Posterior cingulate gyrus (tissue), 11 donors: ENCODE measurements at regions of chr17 and their contacts with region 1.

Region 1: GRCh38 chr17:47789611-47790561 is 31.7 kb downstream of the OSBPL7 start:
- DNase-seq: peak; percentile 23 to 94 (median 58)

Region 2: DNA sequence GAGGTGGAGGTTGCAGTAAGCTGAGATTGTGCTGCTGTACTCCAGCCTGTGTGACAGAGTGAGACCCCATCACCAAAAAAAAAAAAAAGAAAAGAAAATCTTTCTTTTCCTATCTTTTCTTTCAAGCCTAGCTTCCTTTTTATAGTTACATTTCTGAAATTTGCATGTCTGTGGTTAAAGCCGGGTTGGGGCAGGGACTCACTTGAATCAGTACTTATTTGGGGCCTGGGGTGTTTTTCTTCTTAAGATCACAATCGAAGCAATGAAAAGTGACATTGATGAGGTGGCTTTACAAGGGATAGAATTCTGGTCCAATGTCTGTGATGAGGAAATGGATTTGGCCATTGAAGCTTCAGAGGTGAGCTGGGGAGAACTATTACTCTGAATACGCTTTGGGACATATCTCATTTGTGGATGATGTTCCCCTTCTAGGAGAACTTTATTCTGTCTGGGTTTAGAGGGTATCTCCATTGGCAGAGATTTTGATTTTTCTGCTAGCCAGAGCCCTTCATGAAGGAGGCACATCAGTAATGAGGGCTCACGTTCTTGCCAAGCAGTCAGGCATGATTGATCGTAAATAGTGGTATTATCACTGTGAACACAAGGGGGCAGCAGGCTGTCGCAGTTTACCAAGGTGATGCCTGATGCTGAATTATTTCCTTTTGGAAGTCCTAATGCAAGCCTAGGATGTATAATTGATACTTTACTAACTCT is 125.8 kb before region 1 on chr17:
- intact Hi-C with region 1: loop called (anchors 5 kb)
- DNase-seq: peak in 6 of 10 donors; percentile 25 to 90 (median 58)

Region 3: DNA sequence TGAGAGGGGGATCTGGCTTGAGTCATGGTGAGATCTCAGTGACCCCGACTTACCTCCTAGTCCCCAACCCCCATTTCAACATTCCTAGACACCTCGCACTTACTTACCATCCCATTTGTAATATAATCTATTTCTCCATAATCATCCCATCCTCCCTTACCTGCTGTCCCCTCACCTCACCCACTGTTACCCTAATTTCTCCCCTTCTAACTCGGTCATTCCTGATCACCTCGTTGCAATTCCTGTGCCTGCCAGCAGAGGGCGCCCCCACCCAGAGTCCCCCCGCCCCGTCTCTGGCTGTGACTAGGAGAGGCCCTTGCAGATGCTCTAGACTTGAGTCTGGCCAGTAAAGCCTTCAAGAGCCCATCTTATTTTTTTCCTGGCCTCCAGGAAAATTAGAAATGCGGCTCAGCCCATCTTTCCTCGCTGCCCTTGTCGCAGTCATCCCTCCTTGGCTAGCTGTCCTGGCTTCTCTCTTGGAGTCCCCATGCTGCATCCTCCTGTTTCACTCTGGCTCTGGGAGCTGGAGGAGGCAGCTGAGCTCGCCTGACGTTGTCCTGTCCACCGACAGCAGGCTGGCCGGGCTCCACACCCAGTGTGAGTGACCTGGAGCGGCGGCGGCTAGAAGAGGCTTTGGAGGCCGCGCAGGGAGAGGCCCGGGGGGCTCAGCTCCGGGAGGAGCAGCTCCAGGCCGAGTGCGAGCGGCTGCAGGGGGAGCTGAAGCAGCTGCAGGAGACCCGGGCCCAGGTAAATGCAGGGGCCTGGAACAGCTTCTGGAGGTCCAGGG is 90.9 kb before region 1 on chr17:
- intact Hi-C with region 1: loop called (anchors 5 kb)
- DNase-seq: peak in 9 of 10 donors; percentile 42 to 94 (median 73)

Region 4: GRCh38 chr17:47717261-47717697 is 72.6 kb before region 1 on chr17:
- intact Hi-C with region 1: no loop called
- DNase-seq: no peak